HepG2 (cell line): ENCODE measurements at regions of chr5 and their contacts with region 1.

Region 1: DNA sequence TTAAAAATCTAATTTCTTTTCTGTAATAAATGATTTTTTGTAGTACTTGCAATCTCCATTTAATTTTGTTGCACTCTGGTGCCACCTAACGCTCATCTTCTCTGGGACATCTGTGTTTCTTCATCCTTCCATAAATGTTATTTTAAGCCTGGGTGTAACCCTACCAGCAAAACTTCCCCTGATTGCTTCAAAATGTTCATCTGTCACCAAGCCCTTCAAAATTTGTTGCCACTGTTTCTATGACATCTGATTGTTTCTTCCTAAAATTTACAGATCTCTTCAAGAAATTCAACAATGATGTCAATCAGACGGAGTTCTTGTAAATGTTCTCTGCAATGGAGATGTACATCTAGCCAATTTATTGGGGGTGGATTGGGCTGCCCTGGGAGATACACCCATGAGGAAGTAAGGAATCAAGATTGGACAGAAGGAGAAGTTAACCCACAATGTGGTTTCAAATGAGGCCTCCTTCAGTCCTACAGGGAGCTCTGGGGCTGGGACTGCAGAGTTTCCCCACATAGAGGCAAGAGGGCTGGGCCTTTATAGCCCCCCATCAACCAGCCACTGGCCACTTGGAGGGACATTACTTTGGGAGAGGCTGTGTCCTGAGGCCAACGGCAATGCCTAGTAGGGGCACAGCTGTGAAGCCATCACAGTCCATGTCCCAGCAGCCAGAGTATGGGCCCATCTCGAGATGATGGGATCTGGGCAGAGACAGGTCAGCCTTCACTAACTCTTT is 23.3 kb downstream of the MCTP1 start:
- DNase-seq: peak; percentile 37
- ATAC-seq: peak; percentile 44; the same call in 2 of the 3 replicates
- H3K4me3 ChIP-seq: no peak overlapping the region
- H3K27ac ChIP-seq: no peak overlapping the region
- H3K4me1 ChIP-seq: peaks cover 35% of the 10 kb centered on the region
- H3K27me3 ChIP-seq: no peaks in the 10 kb centered on the region
- CTCF ChIP-seq: peak; percentile 45; the same call in 1 of the 2 replicates
- EP300 ChIP-seq: no peak
- POLR2A ChIP-seq: no peak
- RAD21 ChIP-seq: no peak

Region 2: DNA sequence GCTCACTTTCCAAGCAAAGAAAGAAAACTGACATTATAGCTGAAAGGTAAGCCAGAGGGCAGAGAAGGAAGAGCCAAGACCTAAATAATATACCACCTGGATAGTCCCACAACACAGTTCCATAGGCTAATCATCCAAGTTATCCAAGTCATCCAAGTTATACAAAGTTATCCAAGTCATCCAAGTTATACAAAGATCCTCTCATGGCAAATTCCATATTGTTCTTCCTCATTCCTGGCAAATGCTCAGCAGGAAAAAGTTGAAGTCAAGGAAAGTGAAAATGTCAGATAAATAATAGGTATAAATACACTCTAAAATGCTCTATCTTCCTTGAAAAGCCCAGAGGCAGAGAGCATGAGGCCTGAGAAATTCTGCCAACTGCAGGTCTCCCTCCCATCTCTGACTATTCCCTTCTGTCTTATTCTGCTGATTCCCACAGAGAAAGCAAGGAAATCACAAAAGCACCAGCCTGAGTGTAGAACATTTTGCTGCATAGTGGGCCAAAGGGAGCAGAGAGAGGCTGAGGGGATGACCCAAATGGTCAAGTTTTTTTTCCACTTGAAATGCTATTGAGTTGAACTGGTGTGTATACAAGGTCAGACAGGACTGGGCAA is 10.8 kb after region 1 on chr5:
- CTCF ChIA-PET with region 1: no interaction called
- POLR2A ChIA-PET with region 1: no interaction called
- in situ Hi-C with region 1: no loop called
- intact Hi-C with region 1: no loop called
- DNase-seq: no peak
- ATAC-seq: no peak
- H3K4me3 ChIP-seq: no peak overlapping the region
- H3K27ac ChIP-seq: no peak overlapping the region
- H3K4me1 ChIP-seq: no peaks in the 10 kb centered on the region
- H3K27me3 ChIP-seq: peaks cover 0 to 18% of the 10 kb centered on the region in 2 experiments; a peak in 3 of 5 replicates
- CTCF ChIP-seq: no peak
- EP300 ChIP-seq: no peak
- POLR2A ChIP-seq: no peak
- RAD21 ChIP-seq: no peak

Region 3: GRCh38 chr5:95283761-95284415 is 22.3 kb after region 1 on chr5:
- CTCF ChIA-PET with region 1: no interaction called
- POLR2A ChIA-PET with region 1: no interaction called
- in situ Hi-C with region 1: no loop called
- intact Hi-C with region 1: loop called (anchors 2 kb)
- DNase-seq: no peak
- ATAC-seq: peak; percentile 82
- H3K4me3 ChIP-seq: peak overlapping the region; percentile 47 to 74 (median 59); a peak in 5 of 6 replicates
- H3K27ac ChIP-seq: no peak overlapping the region
- H3K4me1 ChIP-seq: peaks cover 7% of the 10 kb centered on the region; the same call in 1 of the 2 replicates
- H3K27me3 ChIP-seq: peaks cover 2 to 39% of the 10 kb centered on the region in 2 experiments
- CTCF ChIP-seq: peak; percentile 74
- EP300 ChIP-seq: no peak
- POLR2A ChIP-seq: no peak
- RAD21 ChIP-seq: peak; percentile 42; the same call in 1 of the 2 replicates